Mucosa of descending colon (tissue), 3 donors: ENCODE measurements at regions of chr17 and their contacts with region 1.

Region 1: DNA sequence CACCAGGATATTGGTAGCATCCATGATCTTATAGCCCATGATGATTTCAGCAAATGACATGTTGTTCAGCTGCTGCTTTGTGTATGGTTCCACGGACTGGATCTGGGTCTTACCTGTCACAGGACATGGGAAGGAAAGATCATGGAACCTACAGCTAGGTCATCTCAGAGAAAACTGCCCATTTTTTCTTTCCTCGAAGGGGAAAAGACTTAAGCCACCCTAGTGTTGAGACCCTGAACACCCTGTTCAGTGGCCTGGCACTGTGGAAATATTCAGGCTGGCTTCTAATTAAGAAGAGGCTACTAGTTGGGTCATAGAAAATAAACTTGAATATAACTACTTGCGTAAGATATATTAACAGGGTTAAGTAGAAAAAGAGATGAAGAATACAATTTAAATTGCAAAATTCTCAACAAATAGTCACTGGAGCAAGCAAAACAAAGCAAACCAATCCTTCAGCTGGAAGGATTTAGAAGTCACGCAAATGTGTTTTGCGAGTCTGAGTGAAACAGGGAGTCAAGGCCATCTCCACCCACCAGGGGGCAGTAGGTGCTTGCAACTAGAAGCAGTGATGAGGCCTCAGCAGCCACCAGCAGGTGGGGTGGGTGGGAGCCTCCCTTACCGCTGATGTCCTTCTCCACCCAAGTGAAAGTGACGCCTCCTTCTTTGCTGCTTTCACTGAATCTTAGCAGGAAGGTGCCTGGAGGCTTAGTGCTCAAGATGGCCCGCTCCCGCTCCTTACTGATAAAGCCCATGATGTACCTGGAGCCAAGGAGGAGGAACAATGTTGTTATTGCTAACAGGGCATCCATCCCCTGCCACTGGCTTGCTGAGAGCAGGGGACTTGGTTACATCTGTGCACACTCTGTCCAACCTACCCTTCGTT is 34.3 kb downstream of the STAT5A start:
- DNase-seq: peak; percentile 92 to 99 (median 93)
- ATAC-seq: peak; percentile 99
- H3K4me3 ChIP-seq: no peak overlapping the region
- H3K4me1 ChIP-seq: no peaks in the 10 kb centered on the region
- CTCF ChIP-seq: peak; percentile 97

Region 2: DNA sequence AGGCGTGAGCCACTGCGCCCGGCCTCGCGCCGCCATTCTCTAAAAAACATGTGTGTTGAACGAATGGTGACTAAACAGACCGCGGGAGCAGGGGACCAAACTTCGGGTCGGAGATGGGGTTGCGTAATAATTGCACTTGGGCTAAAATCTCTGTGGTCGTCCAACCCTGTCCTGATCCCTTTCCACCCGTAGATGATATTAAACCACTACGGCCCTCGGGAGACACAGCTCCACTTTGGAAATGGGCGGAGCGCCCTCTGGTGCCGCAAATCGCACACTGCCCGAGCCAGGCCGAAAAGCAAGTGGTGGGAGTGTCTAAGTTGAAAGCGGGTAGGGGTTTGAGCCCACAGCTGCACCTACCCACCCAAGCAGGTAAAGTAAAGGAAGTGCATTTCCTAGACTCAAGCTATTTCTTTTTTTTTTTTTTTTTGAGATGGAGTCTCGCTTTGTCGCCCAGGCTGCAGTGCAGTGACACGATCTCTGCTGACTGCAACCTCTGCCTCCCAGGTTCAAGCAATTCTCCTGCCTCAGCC is 83.4 kb after region 1 on chr17:
- intact Hi-C with region 1: loop called (anchors 2 to 5 kb)
- DNase-seq: peak; percentile 86 to 93 (median 93)
- ATAC-seq: peak; percentile 59
- H3K4me3 ChIP-seq: no peak overlapping the region
- H3K4me1 ChIP-seq: peaks cover 14% of the 10 kb centered on the region
- CTCF ChIP-seq: peak; percentile 83

Region 3: GRCh38 chr17:42517516-42517915 is 194.9 kb after region 1 on chr17:
- intact Hi-C with region 1: loop called in 1 of 2 experiments (anchors 10 kb)
- DNase-seq: peak; percentile 91 to 95 (median 93)
- ATAC-seq: peak; percentile 73
- H3K4me3 ChIP-seq: no peak overlapping the region
- H3K4me1 ChIP-seq: peaks cover 50% of the 10 kb centered on the region
- CTCF ChIP-seq: peak; percentile 96